Caco-2 (cell line): ENCODE measurements at regions of chr1 and their contacts with region 1.

Region 1: GRCh38 chr1:6889875-6890480 is 104.7 kb downstream of the CAMTA1 start:
- DNase-seq: peak; percentile 59 to 63
- H3K4me3 ChIP-seq: no peak overlapping the region
- H3K4me3 Mint-ChIP-seq: no peak overlapping the region
- H3K27ac Mint-ChIP-seq: no peak overlapping the region
- H3K4me1 ChIP-seq: peaks cover 3% of the 10 kb centered on the region; the same call in 1 of the 2 replicates
- H3K4me1 Mint-ChIP-seq: no peaks in the 10 kb centered on the region
- H3K27me3 ChIP-seq: no peaks in the 10 kb centered on the region
- H3K27me3 Mint-ChIP-seq: no peaks in the 10 kb centered on the region
- CTCF ChIP-seq: peak; percentile 57 to 87

Region 2: GRCh38 chr1:6727535-6727934 is 162.4 kb before region 1 on chr1:
- CTCF ChIA-PET with region 1: no interaction called
- POLR2A ChIA-PET with region 1: no interaction called
- intact Hi-C with region 1: loop called (anchors 5 kb)
- DNase-seq: peak in 1 of 2 experiments; percentile 48
- H3K4me3 ChIP-seq: no peak overlapping the region
- H3K4me3 Mint-ChIP-seq: no peak overlapping the region
- H3K27ac Mint-ChIP-seq: no peak overlapping the region
- H3K4me1 ChIP-seq: peaks cover 15% of the 10 kb centered on the region
- H3K4me1 Mint-ChIP-seq: peaks cover 19% of the 10 kb centered on the region
- H3K27me3 ChIP-seq: no peaks in the 10 kb centered on the region
- H3K27me3 Mint-ChIP-seq: peaks cover 7% of the 10 kb centered on the region
- CTCF ChIP-seq: peak; percentile 71 to 78

Region 3: GRCh38 chr1:6794164-6794563 is 95.8 kb before region 1 on chr1:
- CTCF ChIA-PET with region 1: no interaction called
- POLR2A ChIA-PET with region 1: no interaction called
- intact Hi-C with region 1: loop called (anchors 1 kb)
- DNase-seq: peak in 1 of 2 experiments; percentile 44
- H3K4me3 ChIP-seq: no peak overlapping the region
- H3K4me3 Mint-ChIP-seq: no peak overlapping the region
- H3K27ac Mint-ChIP-seq: no peak overlapping the region
- H3K4me1 ChIP-seq: peaks cover 5% of the 10 kb centered on the region; the same call in 1 of the 2 replicates
- H3K4me1 Mint-ChIP-seq: peaks cover 9% of the 10 kb centered on the region
- H3K27me3 ChIP-seq: no peaks in the 10 kb centered on the region
- H3K27me3 Mint-ChIP-seq: no peaks in the 10 kb centered on the region
- CTCF ChIP-seq: peak in 1 of 2 experiments; percentile 11